Breast epithelium (tissue), 4 donors: ENCODE measurements at regions of chr10 and their contacts with region 1.

Region 1: GRCh38 chr10:28375399-28376369 is 72.8 kb upstream of the MPP7 start:
- DNase-seq: peak in 1 of 2 donors; percentile 57
- H3K4me3 ChIP-seq: no peak overlapping the region
- H3K27ac ChIP-seq: peak overlapping the region in 1 of 2 donors; percentile 61
- H3K4me1 ChIP-seq: no peaks in the 10 kb centered on the region
- H3K27me3 ChIP-seq: no peaks in the 10 kb centered on the region
- CTCF ChIP-seq: no peak
- POLR2A ChIP-seq: no peak

Region 2: GRCh38 chr10:28256797-28257196 is 118.9 kb before region 1 on chr10:
- intact Hi-C with region 1: loop called (anchors 5 kb)
- DNase-seq: no peak
- H3K4me3 ChIP-seq: no peak overlapping the region
- H3K27ac ChIP-seq: no peak overlapping the region
- H3K4me1 ChIP-seq: no peaks in the 10 kb centered on the region
- H3K27me3 ChIP-seq: no peaks in the 10 kb centered on the region
- CTCF ChIP-seq: no peak
- POLR2A ChIP-seq: no peak